BJ (cell line): ENCODE measurements at regions of chr2 and their contacts with region 1.

Region 1: DNA sequence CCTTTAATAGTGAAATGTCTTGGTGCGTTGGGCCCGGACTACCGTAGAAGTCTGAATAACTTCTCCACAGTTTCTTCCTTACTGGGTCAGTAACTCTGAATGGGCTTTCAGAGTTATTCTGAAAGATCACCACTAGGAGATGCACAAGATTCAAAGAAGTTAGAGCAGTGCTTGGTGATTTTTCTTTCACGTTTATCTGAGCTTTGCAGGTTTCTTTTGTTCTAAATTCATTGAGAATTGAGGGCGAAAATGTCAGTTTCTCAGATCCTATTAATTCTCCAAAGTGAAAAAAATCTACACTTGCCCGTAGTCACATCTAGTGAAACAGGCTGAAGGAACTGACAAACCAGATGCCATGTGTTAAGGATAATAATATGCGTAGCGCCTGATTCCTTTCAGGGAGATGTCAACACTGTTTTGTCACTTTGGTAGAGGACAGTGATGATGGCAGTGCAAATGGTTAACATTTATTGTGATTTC is 70.1 kb downstream of the QPCT start:
- DNase-seq: peak; percentile 31
- H3K4me3 ChIP-seq: no peak overlapping the region
- H3K27me3 ChIP-seq: no peaks in the 10 kb centered on the region
- CTCF ChIP-seq: peak; percentile 87

Region 2: DNA sequence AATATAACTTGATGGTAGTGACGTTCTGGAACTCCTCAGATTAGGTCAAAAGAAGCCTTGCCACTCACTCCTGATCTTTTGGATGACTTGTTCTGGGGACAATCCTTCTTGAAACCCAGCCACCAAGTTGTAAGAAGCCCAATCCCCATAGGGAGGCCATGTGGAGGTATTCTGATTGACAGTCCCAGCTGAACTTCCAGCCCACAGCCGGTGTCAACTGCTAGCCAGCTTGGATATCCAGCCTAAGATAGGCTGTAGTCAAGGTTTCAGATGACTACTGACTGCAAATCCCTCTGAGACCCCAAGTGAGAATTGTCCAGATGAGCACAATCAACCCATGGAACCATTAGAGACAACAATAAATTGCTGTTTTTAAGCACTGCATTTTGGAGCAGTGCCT is 289.1 kb before region 1 on chr2:
- CTCF ChIA-PET with region 1: no interaction called
- POLR2A ChIA-PET with region 1: no interaction called
- DNase-seq: no peak
- H3K4me3 ChIP-seq: no peak overlapping the region
- H3K27me3 ChIP-seq: no peaks in the 10 kb centered on the region
- CTCF ChIP-seq: no peak

Region 3: DNA sequence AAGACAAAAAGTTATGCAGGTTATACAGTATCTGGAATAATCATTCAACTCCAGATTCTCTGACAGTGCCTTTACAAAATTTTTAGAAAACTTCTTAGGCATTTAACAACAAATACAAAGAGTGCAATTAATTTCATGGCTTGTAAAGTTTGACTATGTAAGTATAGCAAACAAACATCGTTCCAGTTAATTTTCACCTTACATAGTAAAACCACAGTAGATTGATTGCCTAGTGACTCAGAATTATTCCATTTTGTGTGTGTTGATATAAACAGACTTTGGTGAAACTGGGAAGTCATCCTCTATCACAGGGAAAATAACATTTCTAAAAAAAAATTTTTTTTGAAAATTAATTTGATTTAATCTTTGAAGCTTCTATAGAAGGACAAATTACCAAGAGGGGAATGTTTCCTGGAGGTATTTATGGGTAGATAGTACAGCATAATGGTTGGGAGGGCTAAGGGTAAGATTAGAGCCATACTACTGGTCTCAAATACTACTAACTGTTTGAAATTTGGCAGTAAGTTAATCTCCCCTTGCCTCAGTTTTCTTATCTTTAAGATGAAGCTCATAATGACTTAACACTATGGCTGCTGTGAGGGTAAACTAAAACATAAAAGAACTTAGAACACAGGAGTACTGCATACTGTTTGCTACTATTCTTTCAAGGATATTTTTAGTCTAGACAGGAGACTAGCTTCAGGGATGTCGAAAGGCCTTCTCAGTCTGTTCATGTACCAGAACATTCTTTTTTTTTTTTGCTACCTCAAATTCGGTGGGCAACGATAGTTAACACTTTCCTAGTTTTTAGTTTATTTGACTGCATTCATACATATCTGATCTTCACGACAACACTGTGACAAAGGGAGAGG is 163.4 kb before region 1 on chr2:
- CTCF ChIA-PET with region 1: no interaction called
- POLR2A ChIA-PET with region 1: no interaction called
- DNase-seq: no peak
- H3K4me3 ChIP-seq: no peak overlapping the region
- H3K27me3 ChIP-seq: no peaks in the 10 kb centered on the region
- CTCF ChIP-seq: no peak

Region 4: DNA sequence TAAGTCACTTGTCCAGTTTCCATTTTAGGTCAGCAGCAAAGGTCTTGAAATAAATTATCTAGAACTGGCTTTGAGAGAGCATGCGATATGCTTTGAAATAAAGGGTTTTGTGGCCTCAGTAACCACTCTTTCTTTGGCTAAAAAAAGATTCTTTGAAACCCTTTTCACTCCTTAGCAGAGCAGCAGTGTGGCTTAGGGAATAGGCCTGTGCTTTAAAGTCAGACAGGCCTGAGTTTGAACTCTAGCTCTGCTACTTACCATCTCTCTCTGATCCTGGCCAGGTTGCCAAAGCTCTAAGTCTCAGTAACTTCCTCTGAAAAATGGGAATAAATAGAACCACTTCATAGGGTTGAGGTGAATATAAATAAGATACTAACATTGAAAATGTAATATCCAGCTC is 17.3 kb before region 1 on chr2:
- CTCF ChIA-PET with region 1: interaction called, 25 read pairs
- POLR2A ChIA-PET with region 1: no interaction called
- DNase-seq: no peak
- H3K4me3 ChIP-seq: no peak overlapping the region
- H3K27me3 ChIP-seq: no peaks in the 10 kb centered on the region; the same call in 1 of the 2 replicates
- CTCF ChIP-seq: no peak

Region 5: DNA sequence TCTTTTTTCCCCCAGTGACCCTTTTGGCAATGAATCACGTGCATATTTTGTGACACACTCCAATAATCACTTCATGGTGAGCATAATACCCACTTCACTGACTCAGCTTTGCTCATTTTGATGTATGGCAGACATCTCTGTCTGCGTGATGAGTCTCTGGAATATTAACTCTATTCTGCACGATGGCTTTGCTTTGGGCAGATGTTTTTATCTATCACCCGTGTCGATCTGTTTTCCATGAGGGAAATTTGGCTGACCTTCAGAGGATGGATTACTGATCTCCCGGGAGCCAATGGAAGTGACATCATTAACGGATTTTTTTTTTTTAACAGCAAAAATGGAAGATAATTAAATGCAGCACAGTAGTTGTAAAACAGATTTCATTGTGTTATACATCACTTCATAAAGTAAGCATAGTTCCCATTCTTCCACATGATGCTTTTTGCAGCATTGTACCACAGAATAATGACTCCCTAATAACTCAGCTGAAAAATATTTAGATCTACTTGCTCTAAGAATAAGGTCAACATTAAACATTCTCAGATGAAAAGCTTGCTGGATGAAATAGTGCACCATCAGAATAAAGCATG is 227.2 kb after region 1 on chr2:
- CTCF ChIA-PET with region 1: interaction called, 12 read pairs
- POLR2A ChIA-PET with region 1: interaction called, 3 read pairs
- DNase-seq: peak; percentile 93
- H3K4me3 ChIP-seq: no peak overlapping the region
- H3K27me3 ChIP-seq: no peaks in the 10 kb centered on the region
- CTCF ChIP-seq: no peak

Region 6: GRCh38 chr2:37671009-37671815 is 256.7 kb after region 1 on chr2 and contains the start of gene CDC42EP3:
- CTCF ChIA-PET with region 1: interaction called, 19 read pairs
- POLR2A ChIA-PET with region 1: interaction called, 3 read pairs
- DNase-seq: no peak
- H3K4me3 ChIP-seq: peak within 1 kb of the TSS; percentile 91
- H3K27me3 ChIP-seq: no peaks in the 10 kb centered on the region
- CTCF ChIP-seq: no peak
- polyA plus RNA-seq, gene CDC42EP3: 191 and 197 TPM in 2 replicates